ENCODE measurements at regions of chr6 and their contacts with region 1.

Region 1: GRCh38 chr6:89610149-89610642 is 28.4 kb downstream of the LYRM2 start:
- DNase-seq: peak; percentile 71
- CTCF ChIP-seq: peak; percentile 88

Region 2: GRCh38 chr6:89597988-89598692 is 12.1 kb before region 1 on chr6:
- CTCF ChIA-PET with region 1: interaction called, 32 read pairs
- POLR2A ChIA-PET with region 1: no interaction called
- DNase-seq: no peak
- CTCF ChIP-seq: peak; percentile 20

Region 3: DNA sequence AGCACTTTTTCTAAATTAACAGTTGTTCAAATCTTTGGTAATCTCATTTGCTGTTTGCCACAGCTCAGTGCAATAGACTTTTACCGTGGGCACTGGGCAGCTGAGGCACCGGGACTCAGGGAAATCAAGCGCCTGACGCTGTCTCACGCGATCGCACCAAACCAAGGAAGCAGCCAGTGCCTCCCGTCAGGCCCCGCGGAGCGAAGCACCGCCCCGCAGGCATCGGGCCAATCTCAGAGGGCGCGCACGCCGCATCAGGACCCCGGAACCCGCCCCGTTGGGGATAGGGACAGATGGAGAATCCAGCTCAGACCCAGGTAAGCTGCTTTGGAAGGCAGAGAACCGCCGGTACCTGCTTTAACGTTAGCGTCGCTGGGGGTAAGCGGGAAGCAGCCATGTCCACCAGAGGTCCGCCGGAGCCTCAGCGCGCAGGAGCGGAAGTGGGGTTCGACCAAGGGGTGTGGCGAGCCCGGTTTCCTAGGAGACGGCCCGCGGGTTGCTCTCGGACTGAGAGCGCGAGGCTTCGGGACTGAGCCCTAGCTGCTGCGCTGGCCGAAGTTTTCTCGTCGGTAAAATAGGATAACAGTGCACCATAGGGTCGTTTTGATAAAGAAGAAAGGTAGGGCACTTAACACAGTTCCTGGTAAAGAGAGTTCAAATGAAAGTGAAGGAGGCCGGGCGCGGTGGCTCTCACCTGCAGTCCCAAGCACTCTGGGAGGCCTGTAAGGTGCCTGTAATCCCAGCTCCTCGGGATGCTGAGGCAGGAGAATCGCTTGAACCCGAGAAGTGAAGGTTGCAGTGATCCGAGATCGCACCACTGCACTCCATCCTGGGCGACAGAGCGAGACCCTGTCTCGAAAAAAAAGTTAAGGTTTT is 28.4 kb after region 1 on chr6 and contains the start of gene LYRM2:
- CTCF ChIA-PET with region 1: interaction called, 15 read pairs
- POLR2A ChIA-PET with region 1: no interaction called
- DNase-seq: peak; percentile 94
- CTCF ChIP-seq: no peak